ENCODE measurements at regions of chr12 and their contacts with region 1.

Region 1: DNA sequence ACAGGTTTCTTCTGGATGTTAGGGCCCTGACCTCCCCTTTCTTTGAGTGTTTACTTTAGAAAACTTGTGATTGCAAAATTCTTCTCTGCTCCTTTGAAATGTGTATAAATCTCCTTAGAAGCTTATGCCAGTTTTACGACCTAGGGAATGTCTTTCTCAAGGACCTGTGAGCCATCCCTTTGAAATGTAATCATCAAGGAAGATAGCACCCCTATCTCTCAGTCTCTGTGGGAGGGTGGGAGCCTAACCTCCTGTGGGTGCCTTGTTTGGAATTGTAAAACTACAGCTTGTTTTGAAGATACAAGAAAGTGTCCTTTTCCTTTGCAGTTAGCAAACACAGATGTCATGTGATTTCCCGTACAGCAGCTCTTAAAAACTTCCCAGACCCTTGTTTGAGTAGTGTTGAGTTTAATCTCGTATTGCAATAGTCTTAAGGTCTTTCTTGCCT is 3.3 kb downstream of the OR10AD1 start:
- DNase-seq: no peak
- ATAC-seq: no peak

Region 2: GRCh38 chr12:48350249-48351021 is 150.6 kb after region 1 on chr12 and contains the start of gene ZNF641:
- intact Hi-C with region 1: loop called in 1 of 2 experiments (anchors 10 kb)
- DNase-seq: peak; percentile 88
- ATAC-seq: peak; percentile 95 to 96
- total RNA-seq, gene ZNF641: 14.3 to 14.4 TPM

Region 3: DNA sequence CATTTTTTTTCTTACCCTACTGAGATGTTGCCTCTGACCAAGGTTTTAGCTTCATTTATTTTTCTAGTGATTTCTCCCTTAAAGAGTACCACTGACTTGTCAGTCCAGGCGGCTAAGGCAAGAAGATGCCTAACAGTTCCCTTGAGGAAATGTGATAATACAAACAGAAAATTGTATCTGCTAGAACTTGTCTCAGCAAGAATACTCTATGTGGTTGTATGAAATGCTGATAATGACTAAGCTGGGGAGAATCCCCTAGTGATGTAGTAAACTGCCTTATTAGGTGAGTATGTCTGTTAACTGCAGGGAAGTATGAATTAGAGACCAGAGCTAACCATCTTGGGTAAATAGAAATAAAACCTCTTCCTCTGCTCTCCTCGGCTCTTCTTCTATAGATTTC is 289.2 kb after region 1 on chr12:
- intact Hi-C with region 1: no loop called
- DNase-seq: no peak
- ATAC-seq: no peak